Cardiac septum (tissue), 1 donor: ENCODE measurements at regions of chr10 and their contacts with region 1.

Region 1: GRCh38 chr10:113802997-113803396 is 50.9 kb downstream of the DCLRE1A start:
- DNase-seq: no peak

Region 2: DNA sequence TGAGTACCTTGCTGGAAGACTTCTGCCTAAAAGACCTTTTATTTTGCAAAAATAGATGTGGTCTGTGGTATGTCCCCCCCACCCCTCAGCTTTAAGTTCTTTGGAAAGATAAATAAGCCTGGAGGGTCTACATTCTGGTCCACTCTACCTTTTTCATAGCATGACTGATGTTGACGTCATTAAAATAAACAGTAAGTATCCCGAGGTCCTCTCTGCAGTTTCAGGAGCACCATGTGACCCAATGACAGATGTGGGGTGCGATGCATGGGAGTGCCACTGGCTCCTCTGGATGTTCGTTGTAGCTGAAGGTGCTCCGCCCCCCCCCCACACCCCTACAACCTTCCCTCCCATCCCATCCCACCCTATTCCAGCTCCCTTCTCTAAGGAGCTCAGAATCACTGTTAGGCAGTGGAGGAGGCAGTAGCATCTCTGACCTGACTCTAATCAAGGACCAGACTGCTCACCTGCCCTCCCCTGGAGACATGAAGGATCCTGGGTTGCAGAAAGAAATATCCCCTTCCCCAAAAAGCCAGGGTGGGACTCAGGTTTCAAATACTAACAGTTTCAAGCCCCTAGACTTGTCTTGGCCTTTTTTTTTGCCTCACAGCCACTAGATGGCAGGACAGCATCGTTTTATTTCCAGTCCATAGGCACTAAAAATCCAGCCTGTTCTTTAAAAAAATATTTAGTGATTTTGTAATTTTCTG is 98.2 kb before region 1 on chr10:
- intact Hi-C with region 1: loop called (anchors 5 kb)
- DNase-seq: no peak

Region 3: DNA sequence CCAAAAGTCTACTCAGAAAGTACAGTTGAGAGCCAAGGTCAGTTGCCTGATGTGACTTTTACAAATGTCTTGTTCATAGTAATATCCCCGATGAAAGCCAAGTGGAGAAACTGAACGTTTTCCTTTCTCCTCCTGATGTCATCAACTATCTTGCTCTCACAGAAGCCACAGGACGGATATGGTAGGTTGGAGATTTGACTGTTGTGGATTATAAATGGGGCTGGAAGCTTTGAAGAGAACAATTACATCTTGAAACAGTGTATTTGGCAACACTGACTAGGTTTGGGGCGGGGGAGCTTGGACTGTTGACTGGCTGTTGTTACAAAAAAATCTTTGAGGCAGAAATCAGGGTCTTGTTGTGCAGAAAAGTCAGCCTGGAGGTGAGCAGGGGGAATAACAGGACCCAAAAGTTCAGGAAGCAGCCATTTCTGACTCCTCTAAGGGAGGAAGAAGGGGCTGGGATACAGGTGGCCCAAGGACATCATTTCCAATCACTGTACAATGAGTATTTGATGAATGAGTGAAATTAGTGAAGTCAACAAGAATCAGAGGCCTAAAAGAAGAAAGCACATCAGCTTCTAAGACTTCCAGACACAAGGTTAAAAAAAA is 27.2 kb before region 1 on chr10:
- intact Hi-C with region 1: no loop called
- DNase-seq: no peak

Region 4: DNA sequence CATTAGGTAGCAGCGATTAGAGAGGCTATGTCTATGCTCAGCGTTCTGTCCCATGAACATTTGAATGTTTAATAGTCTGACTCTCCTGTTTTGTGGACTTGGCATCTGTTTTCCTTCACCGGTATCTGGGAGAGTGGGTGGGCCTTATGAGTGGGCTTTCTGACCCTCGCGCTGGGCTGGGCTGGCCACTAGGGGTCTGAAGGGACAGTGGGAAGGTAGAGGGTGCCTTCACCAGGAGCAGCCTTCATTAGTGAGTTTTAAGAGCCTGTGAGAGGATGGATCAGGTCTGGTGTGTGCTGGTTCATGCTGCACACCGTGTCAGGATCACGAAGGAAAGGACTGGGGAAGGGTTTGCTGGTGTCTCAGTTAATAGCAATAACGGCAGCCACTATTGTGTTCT is 17.5 kb after region 1 on chr10:
- intact Hi-C with region 1: no loop called
- DNase-seq: no peak

Region 5: DNA sequence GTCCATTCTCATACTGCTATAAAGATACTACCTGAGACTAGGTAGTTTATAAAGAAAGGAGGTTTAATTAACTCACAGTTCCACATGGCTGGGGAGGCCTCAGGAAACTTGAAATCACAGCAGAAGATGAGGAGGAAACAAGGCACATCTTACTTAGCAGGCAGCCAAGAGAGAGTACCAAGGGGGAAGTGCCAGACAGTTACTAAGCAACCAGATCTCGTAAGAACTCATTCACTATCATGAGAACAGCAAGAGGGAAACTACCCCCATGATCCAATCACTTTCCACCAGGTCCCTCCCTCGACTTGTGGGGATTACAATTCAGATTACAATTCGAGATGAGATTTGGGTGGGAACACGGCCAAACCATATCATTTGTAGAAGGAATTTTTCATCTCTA is 87.8 kb after region 1 on chr10:
- intact Hi-C with region 1: no loop called
- DNase-seq: no peak